ENCODE measurements at regions of chr2 and their contacts with region 1.

Region 1: DNA sequence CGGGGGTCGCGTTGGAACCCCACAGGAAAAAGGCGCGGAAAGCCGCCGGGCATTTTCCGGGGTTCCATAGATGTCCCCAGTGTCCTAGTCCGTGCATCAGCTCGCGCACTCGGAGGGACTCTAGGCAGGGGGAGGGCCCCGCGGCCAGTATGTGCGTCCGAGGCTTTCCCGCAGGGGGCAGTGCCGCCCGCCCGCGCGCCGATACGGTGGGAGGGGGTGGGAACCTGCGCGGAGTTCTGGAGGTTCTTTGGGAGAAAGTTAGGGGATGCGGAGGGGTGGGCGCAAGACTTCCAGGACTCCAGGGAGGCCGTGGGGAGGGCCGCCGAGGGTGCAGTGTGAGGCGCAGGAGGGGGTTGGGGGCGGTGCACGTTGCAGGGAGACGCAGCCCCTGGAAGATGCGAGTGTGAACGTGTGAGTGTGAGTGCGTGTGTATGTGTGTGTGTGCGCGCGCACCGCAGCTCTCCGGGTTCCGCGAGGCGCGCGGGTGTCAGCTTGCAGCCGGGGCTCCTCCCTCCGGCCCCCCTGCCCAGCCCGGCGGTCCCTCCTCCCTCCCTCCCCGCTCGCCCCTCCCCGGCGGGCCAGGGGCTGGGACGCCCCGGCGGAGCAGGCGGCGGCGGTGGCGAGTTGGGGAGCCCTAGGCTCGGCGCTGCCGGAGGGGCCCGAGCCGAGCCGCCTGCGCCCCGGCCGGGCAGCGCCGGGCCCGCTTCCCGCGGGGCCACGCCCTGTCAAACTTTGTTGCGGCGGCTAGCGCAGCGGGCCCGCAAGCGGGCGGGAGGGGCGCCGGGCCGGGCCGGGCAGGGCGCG is at the start of gene TCF7L1:
- DNase-seq: peak; percentile 58 to 62
- ATAC-seq: peak; percentile 85
- total RNA-seq, gene TCF7L1: 2.0 to 3.9 TPM

Region 2: DNA sequence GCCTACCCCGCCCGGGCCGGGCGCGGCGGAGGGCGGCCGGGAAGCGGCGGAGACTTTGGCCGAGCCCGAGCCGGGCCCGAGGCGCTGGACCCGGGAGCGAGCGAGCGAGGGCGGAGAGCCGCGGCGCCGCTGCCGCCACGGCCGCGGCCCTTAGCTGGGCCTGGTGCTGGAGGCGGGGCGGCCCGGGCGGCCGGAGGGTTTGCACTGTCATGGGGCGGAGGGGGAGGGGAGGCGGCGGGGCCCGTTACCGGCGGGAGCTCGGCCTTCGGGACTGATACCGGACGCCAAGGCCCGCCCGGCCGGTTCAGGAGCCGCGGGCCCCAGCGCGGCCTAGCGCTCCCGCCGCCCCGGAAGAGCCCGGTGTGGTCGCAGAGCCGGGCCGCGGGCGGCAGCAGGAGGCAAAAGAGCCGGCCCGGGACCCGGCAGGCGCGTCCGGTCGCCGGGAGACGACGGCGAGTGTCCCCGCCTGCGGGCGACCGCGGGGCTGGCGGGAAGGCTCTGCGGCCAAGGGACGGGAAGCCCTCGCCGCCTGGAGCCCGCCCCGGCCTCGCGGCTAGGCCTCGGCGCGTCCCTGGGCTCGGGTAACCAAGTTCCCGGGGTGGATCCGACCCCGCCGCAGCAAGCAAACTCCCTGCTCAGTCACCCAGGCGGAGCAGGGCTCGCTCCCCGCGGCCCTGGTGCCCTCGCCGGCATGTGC is 161.4 kb before region 1 on chr2:
- intact Hi-C with region 1: no loop called
- DNase-seq: peak; percentile 49 to 74
- ATAC-seq: peak; percentile 42

Region 3: GRCh38 chr2:85288244-85288725 is 155.2 kb after region 1 on chr2:
- intact Hi-C with region 1: loop called in 1 of 2 experiments (anchors 5 kb)
- DNase-seq: peak; percentile 51 to 53
- ATAC-seq: peak; percentile 88